ENCODE measurements at regions of chr10 and their contacts with region 1.

Region 1: GRCh38 chr10:102917962-102918816 is at the start of gene CNNM2:
- DNase-seq: peak; percentile 96
- ATAC-seq: peak; percentile 89
- H3K4me3 Mint-ChIP-seq: peak within 1 kb of the TSS; percentile 96
- H3K27ac Mint-ChIP-seq: peak within 1 kb of the TSS; percentile 93
- H3K4me1 Mint-ChIP-seq: peaks cover 45% of the 10 kb centered on the region
- H3K27me3 Mint-ChIP-seq: peaks cover 10% of the 10 kb centered on the region
- CTCF ChIP-seq: no peak
- total RNA-seq, gene CNNM2: 5.5 and 7.3 TPM in 2 replicates

Region 2: GRCh38 chr10:102713814-102714620 is 204.2 kb before region 1 on chr10 and contains the start of gene ARL3:
- CTCF ChIA-PET with region 1: interaction called, 3 read pairs
- POLR2A ChIA-PET with region 1: interaction called, 7 read pairs
- intact Hi-C with region 1: loop called (anchors 5 kb)
- DNase-seq: peak; percentile 89
- ATAC-seq: peak; percentile 85
- H3K4me3 Mint-ChIP-seq: peak within 1 kb of the TSS; percentile 95
- H3K27ac Mint-ChIP-seq: peak within 1 kb of the TSS; percentile 92
- H3K4me1 Mint-ChIP-seq: peaks cover 44% of the 10 kb centered on the region
- H3K27me3 Mint-ChIP-seq: no peaks in the 10 kb centered on the region
- CTCF ChIP-seq: no peak
- total RNA-seq, gene ARL3: 4.1 and 5.1 TPM in 2 replicates

Region 3: DNA sequence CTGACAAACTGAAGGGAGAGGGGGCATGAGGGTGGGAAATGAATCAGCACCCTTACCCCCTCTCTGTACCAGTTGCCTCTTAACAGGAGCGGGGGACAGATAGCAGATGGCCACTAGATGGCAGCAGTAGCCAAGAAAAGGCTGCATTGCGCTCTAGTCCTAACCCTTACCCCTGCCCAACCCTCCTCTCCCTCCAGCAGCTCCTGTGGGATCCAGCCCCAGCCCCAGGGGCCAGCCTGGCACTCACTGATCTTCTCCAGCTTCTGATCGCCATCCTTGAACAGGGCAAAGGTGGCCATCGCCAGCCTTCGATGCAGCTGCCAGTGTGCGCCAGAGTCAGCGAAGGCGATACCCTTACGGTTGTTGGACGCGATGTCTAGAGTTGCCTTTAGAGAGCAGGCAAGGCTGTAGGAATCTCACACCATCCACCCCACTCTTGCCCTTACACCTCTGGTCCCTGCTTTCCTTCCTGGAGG is 83.1 kb before region 1 on chr10:
- CTCF ChIA-PET with region 1: interaction called, 3 read pairs
- POLR2A ChIA-PET with region 1: no interaction called
- intact Hi-C with region 1: loop called (anchors 1 kb)
- DNase-seq: peak; percentile 57
- ATAC-seq: peak; percentile 95
- H3K4me3 Mint-ChIP-seq: no peak overlapping the region
- H3K27ac Mint-ChIP-seq: no peak overlapping the region
- H3K4me1 Mint-ChIP-seq: peaks cover 2% of the 10 kb centered on the region
- H3K27me3 Mint-ChIP-seq: peaks cover 3% of the 10 kb centered on the region
- CTCF ChIP-seq: peak; percentile 21

Region 4: DNA sequence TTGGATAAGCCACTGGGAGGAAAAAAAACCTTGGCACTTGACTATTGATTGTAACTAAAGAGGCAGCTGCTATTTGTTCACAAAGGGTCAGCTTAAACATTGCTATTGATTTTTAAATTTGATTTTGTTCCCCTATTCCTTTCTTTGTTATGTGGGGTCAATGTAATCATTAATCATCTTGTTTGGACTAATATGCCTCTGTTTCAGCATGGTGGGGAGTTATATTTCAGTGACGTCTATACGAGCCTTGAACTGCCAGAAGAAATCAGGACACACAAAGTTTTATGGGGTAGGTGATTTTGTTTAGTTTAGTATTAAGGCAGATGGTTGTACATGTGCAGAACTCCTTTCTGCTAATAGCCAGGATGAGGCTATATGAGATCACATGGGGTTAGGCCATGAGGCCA is 41.4 kb before region 1 on chr10:
- CTCF ChIA-PET with region 1: no interaction called
- POLR2A ChIA-PET with region 1: no interaction called
- intact Hi-C with region 1: no loop called
- DNase-seq: no peak
- ATAC-seq: no peak
- H3K4me3 Mint-ChIP-seq: no peak overlapping the region
- H3K27ac Mint-ChIP-seq: no peak overlapping the region
- H3K4me1 Mint-ChIP-seq: no peaks in the 10 kb centered on the region
- H3K27me3 Mint-ChIP-seq: peaks cover 5% of the 10 kb centered on the region
- CTCF ChIP-seq: no peak

Region 5: GRCh38 chr10:103069453-103070331 is 151.5 kb after region 1 on chr10:
- CTCF ChIA-PET with region 1: interaction called, 38 read pairs
- POLR2A ChIA-PET with region 1: interaction called, 5 read pairs
- intact Hi-C with region 1: loop called (anchors 1 kb)
- DNase-seq: peak; percentile 40
- ATAC-seq: peak; percentile 82
- H3K4me3 Mint-ChIP-seq: peak overlapping the region; percentile 55
- H3K27ac Mint-ChIP-seq: peak overlapping the region; percentile 73
- H3K4me1 Mint-ChIP-seq: peaks cover 33% of the 10 kb centered on the region
- H3K27me3 Mint-ChIP-seq: no peaks in the 10 kb centered on the region
- CTCF ChIP-seq: no peak

Region 6: GRCh38 chr10:103244663-103245271 is 326.6 kb after region 1 on chr10:
- CTCF ChIA-PET with region 1: interaction called, 84 read pairs
- POLR2A ChIA-PET with region 1: interaction called, 12 read pairs
- intact Hi-C with region 1: loop called (anchors 1 kb)
- DNase-seq: peak; percentile 49
- ATAC-seq: peak; percentile 74
- H3K4me3 Mint-ChIP-seq: no peak overlapping the region
- H3K27ac Mint-ChIP-seq: no peak overlapping the region
- H3K4me1 Mint-ChIP-seq: peaks cover 20% of the 10 kb centered on the region
- H3K27me3 Mint-ChIP-seq: peaks cover 4% of the 10 kb centered on the region
- CTCF ChIP-seq: no peak

Region 7: GRCh38 chr10:103367782-103368518 is 449.8 kb after region 1 on chr10 and contains the start of gene TAF5:
- CTCF ChIA-PET with region 1: no interaction called
- POLR2A ChIA-PET with region 1: interaction called, 3 read pairs
- intact Hi-C with region 1: loop called (anchors 1 kb)
- DNase-seq: peak; percentile 79
- ATAC-seq: peak; percentile 72
- H3K4me3 Mint-ChIP-seq: peak within 1 kb of the TSS; percentile 90
- H3K27ac Mint-ChIP-seq: peak within 1 kb of the TSS; percentile 87
- H3K4me1 Mint-ChIP-seq: peaks cover 12% of the 10 kb centered on the region
- H3K27me3 Mint-ChIP-seq: no peaks in the 10 kb centered on the region
- CTCF ChIP-seq: no peak
- total RNA-seq, gene TAF5: 3.6 and 3.8 TPM in 2 replicates

Region 8: DNA sequence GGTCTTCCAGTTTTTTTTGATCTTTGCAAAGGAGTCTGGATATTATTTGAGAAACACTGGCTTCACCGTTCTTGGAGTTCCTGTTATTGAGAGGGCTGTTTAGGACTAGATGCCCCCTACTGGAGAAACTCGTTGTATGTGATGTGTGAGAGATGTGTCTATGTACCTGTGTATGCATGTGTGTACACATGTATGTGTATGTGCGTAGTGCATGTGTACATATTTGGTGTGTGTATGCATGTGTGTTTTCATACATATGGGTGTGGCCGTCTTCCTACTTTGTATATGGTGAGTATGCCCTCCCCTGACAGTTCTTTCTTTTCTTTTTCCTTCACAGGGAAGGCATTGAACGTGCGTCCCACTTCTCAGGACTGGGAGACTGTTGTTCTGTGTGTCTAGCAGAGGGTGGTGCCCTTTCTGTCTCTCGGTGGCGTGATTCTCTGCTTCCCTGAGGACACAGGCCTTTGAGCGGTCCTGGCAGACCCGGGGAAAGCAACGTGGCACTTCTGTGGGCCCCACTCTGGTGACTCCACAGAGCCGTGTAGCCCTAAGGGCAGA is 563.9 kb after region 1 on chr10:
- CTCF ChIA-PET with region 1: no interaction called
- POLR2A ChIA-PET with region 1: no interaction called
- intact Hi-C with region 1: loop called (anchors 2 kb)
- DNase-seq: no peak
- ATAC-seq: peak; percentile 78
- H3K4me3 Mint-ChIP-seq: no peak overlapping the region
- H3K27ac Mint-ChIP-seq: no peak overlapping the region
- H3K4me1 Mint-ChIP-seq: peaks cover 9% of the 10 kb centered on the region
- H3K27me3 Mint-ChIP-seq: no peaks in the 10 kb centered on the region
- CTCF ChIP-seq: peak; percentile 49

Region 9: GRCh38 chr10:103540722-103541121 is 622.5 kb after region 1 on chr10:
- CTCF ChIA-PET with region 1: no interaction called
- POLR2A ChIA-PET with region 1: no interaction called
- intact Hi-C with region 1: no loop called
- DNase-seq: no peak
- ATAC-seq: no peak
- H3K4me3 Mint-ChIP-seq: no peak overlapping the region
- H3K27ac Mint-ChIP-seq: no peak overlapping the region
- H3K4me1 Mint-ChIP-seq: peaks cover 13% of the 10 kb centered on the region
- H3K27me3 Mint-ChIP-seq: peaks cover 15% of the 10 kb centered on the region
- CTCF ChIP-seq: no peak